ENCODE measurements at regions of chr14 and their contacts with region 1.

Region 1: GRCh38 chr14:60151715-60152114 is 13.5 kb downstream of the DHRS7 start:
- DNase-seq: peak; percentile 84
- H3K4me3 ChIP-seq: no peak overlapping the region
- H3K27ac ChIP-seq: peak overlapping the region; percentile 65
- H3K4me1 ChIP-seq: peaks cover 20% of the 10 kb centered on the region
- H3K27me3 ChIP-seq: no peaks in the 10 kb centered on the region
- CTCF ChIP-seq: no peak

Region 2: DNA sequence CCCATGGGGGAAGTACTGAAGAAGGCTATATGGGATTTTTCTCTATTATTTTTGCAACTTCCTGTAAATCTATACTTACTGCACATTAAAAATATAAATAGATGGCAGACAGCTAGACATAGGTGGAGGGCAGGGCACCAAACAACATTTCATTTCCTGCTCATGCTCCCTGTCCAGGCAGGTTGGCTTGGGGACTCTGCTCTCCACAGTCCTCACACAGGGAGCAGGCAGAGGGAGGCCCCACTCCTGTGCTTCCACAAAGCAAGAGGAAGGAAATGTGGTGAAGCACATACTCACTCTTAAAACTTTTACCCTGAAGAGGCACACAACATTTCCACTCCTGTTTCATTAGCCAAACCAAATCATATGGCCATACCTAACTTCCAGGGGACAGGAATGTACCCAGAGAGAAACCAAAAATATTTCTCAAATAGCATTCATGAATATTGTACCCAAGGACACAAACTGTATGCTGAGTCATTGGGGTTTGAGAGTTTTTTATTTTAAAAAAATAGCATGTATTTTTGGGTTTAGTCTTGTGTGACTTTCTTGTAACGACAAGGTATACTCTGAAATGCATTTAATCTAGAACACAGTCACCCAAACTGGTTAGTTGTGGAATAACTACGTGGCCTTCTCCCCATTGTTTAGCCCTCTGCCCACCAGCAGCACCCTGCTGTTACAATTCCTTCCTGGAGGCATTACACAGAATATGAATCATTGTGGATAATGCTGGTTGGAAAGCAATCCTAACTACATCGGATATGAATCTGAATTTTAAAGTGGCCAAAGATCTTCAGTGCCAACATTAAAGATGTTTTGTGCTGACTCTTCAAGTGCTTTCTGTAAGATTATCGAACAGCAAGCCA is 322.0 kb before region 1 on chr14:
- CTCF ChIA-PET with region 1: no interaction called
- dilution Hi-C with region 1: no loop called
- in situ Hi-C with region 1: no loop called
- intact Hi-C with region 1: no loop called
- DNase-seq: no peak
- H3K4me3 ChIP-seq: no peak overlapping the region
- H3K27ac ChIP-seq: no peak overlapping the region
- H3K4me1 ChIP-seq: no peaks in the 10 kb centered on the region
- H3K27me3 ChIP-seq: no peaks in the 10 kb centered on the region
- CTCF ChIP-seq: no peak

Region 3: GRCh38 chr14:60116181-60116580 is 35.5 kb before region 1 on chr14:
- CTCF ChIA-PET with region 1: no interaction called
- dilution Hi-C with region 1: loop called (anchors 5 kb)
- in situ Hi-C with region 1: no loop called
- intact Hi-C with region 1: no loop called
- DNase-seq: peak; percentile 78
- H3K4me3 ChIP-seq: no peak overlapping the region
- H3K27ac ChIP-seq: peak overlapping the region; percentile 27
- H3K4me1 ChIP-seq: peaks cover 3% of the 10 kb centered on the region
- H3K27me3 ChIP-seq: no peaks in the 10 kb centered on the region
- CTCF ChIP-seq: no peak

Measured in mammary epithelial cell (primary cell).